ENCODE measurements at regions of chr5 and their contacts with region 1.

Region 1: DNA sequence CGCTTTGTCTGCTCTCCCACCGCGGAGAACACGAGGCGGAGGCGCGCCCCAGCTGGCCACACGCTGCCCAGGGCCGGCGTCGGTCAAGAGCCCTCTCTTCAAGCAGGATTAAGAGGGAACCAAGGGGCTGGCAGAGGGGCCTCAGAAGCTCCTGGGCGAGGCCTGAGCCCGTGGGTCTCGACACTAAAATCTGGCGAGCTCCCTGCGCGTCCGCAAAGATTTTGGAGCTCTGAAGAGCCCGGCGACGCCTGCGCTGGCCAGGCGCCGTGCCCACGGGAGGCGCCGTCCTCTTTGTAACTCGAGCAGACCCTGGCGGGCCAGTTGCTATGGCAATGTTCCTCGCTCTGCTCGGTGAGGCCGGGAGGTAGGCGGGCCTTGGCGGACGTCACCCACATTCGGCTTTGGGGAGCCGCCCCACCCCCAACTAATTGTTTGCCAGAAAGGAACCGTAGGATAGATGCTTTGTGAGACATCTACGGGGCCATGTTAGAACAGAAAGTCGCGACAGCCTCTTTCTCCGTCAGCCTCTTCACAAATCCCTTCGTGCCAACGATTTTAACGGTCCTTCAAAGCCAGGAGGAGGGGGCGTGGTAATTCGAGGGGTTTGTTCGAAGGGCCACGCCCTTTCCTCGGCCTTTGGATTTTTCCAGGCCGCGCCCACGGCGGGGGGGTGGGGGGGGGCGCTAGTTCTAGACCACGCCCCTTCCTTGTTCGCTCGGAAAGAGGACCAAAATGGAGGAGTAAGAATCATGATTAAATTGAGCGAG is 714 bp upstream of the CNOT8 start:
- DNase-seq: peak; percentile 84
- H3K4me3 Mint-ChIP-seq: peak overlapping the region; percentile 98
- H3K27ac Mint-ChIP-seq: peak overlapping the region; percentile 100
- H3K4me1 Mint-ChIP-seq: peaks cover 30% of the 10 kb centered on the region
- H3K27me3 Mint-ChIP-seq: no peaks in the 10 kb centered on the region

Region 2: DNA sequence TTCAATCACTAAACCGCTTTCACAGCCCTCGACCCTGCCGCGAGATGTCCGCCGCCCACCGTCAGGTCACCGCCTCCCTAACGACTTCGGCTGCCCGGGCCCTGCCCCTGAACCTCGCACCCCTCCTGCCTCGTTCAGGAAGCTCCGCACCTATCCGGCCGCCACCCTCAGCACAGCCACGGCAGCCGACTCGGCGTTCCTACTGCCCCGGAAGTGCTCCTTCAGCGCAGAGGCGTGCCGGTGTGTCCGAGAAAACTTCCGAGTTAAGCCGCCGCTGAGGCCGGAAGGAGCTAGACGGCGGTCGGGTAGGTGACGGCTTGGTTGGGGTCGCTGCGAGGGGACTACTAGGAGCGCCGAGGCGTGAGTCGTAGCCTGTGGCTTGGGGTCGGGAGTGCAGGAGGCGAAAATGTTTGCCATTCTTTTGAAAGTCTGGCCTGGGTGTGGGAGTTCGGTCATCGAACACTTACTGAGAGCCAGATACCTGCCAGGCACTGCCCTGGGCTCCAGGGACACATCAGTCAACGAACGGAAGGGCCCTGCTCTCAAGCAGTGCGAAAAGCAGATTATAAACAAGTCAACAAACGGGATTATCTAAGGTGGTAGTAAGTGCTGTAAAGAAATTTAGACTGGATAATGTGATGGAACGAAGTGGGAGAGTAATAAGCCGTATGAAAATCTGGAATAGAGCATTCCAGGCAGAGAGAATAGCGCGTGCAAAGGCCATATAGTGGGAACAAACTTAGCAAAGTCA is 818.8 kb before region 1 on chr5 and contains the starts of genes FAM114A2 and MFAP3:
- intact Hi-C with region 1: loop called (anchors 10 kb)
- DNase-seq: peak; percentile 87
- H3K4me3 Mint-ChIP-seq: peak within 1 kb of the TSS; percentile 98
- H3K27ac Mint-ChIP-seq: peak within 1 kb of the TSS; percentile 94
- H3K4me1 Mint-ChIP-seq: peaks cover 37% of the 10 kb centered on the region
- H3K27me3 Mint-ChIP-seq: no peaks in the 10 kb centered on the region
- total RNA-seq, gene FAM114A2: 23.6 and 31.2 TPM in 2 replicates
- total RNA-seq, gene MFAP3: 17.1 and 21.8 TPM in 2 replicates

Region 3: DNA sequence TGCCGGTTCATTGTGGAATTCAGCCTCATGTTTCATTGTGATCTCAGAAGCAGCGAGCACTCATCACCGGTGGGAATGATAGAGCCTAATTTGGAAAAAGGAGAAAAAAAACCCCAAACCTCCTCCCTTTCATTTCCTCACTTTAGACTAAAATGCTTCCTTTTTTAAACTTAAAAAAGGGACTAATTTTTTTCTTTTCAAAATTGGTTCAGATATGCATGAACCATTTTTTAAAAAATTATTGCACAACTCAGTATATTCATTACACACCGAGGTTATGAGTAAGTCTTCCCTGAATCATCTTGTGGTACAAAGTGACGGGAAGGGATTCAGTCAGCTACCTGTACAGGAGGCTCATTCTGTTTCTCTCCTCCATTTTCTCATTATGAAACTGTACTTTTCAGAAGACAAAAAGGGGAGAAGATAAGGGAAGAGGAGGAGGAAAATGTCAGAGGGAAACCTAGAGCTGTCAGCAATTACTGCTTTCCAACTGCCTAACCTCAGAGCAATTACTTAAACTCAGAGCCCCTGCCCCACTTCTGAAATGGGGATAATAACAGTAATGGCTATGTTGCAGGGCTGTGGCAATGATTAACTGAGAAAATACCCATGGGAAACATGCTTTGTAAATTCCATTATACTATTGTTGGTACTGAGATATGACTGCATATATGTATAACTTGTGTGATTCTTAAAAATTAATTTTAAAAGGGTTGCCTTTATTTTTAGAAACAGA is 643.2 kb before region 1 on chr5:
- intact Hi-C with region 1: loop called (anchors 10 kb)
- DNase-seq: no peak
- H3K4me3 Mint-ChIP-seq: peak overlapping the region; percentile 9
- H3K27ac Mint-ChIP-seq: peak overlapping the region; percentile 83
- H3K4me1 Mint-ChIP-seq: peaks cover 43% of the 10 kb centered on the region
- H3K27me3 Mint-ChIP-seq: no peaks in the 10 kb centered on the region

Region 4: GRCh38 chr5:154445422-154446182 is 412.1 kb before region 1 on chr5 and contains the start of gene SAP30L:
- intact Hi-C with region 1: loop called (anchors 1 kb)
- DNase-seq: peak; percentile 96
- H3K4me3 Mint-ChIP-seq: peak within 1 kb of the TSS; percentile 98
- H3K27ac Mint-ChIP-seq: peak within 1 kb of the TSS; percentile 94
- H3K4me1 Mint-ChIP-seq: peaks cover 31% of the 10 kb centered on the region
- H3K27me3 Mint-ChIP-seq: no peaks in the 10 kb centered on the region
- total RNA-seq, gene SAP30L: 35.9 and 36.0 TPM in 2 replicates

Region 5: GRCh38 chr5:154647114-154647760 is 210.5 kb before region 1 on chr5:
- intact Hi-C with region 1: loop called (anchors 1 kb)
- DNase-seq: no peak
- H3K4me3 Mint-ChIP-seq: peak overlapping the region; percentile 71
- H3K27ac Mint-ChIP-seq: no peak overlapping the region
- H3K4me1 Mint-ChIP-seq: peaks cover 15% of the 10 kb centered on the region
- H3K27me3 Mint-ChIP-seq: peaks cover 37% of the 10 kb centered on the region

Region 6: DNA sequence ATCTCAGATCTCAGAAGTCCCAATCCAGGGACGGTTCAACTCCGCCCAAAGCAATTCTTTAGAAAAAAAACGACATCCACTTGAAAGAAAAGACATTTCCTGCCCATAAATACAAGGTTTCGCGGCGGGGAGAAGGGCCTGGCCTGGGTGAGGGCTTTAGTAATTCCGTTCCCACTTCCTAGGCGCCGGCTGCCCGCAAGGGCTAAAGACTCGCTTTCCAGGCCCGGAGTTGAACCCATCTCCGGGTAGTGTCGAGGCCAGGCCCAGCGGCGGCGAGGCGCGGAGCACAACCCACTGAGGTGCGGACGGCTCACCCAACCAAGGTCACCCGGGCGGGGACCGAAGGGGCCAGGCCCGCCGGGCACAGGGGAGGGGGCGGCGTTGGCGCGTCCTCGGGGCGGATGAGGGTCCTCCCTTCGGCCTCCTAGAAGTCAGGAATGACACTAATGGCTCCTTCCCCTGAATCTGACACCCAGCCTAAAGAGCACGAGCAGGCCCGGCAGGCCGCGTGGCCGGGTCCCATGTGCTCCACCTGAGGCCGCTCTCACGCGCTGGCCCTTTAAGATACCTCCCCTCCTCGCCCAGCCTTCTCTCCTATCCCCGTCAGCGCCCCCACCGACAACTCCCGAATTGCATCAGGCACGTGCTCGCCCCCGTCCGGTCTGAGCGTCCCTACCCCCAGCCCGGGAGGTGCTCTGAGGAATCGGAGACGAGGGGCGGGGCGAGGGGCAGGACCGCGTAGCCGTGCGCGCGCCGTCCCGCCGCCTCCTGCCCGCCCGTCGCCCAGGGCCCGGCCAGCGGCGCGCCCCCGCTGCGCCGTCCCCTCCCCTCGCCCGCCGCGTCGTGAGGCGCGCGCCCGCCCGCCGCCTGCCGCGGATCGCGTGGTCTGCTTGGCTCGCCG is 103.0 kb before region 1 on chr5:
- intact Hi-C with region 1: loop called (anchors 1 kb)
- DNase-seq: peak; percentile 99
- H3K4me3 Mint-ChIP-seq: peak overlapping the region; percentile 84
- H3K27ac Mint-ChIP-seq: peak overlapping the region; percentile 97
- H3K4me1 Mint-ChIP-seq: peaks cover 34% of the 10 kb centered on the region
- H3K27me3 Mint-ChIP-seq: no peaks in the 10 kb centered on the region

Region 7: GRCh38 chr5:154899151-154899816 is 41.6 kb after region 1 on chr5:
- intact Hi-C with region 1: no loop called
- DNase-seq: no peak
- H3K4me3 Mint-ChIP-seq: no peak overlapping the region
- H3K27ac Mint-ChIP-seq: no peak overlapping the region
- H3K4me1 Mint-ChIP-seq: no peaks in the 10 kb centered on the region
- H3K27me3 Mint-ChIP-seq: no peaks in the 10 kb centered on the region

Region 8: GRCh38 chr5:154940772-154941620 is 83.3 kb after region 1 on chr5 and contains the start of gene MRPL22:
- intact Hi-C with region 1: loop called (anchors 1 kb)
- DNase-seq: peak; percentile 93
- H3K4me3 Mint-ChIP-seq: peak within 1 kb of the TSS; percentile 98
- H3K27ac Mint-ChIP-seq: peak within 1 kb of the TSS; percentile 95
- H3K4me1 Mint-ChIP-seq: peaks cover 32% of the 10 kb centered on the region
- H3K27me3 Mint-ChIP-seq: no peaks in the 10 kb centered on the region
- total RNA-seq, gene MRPL22: 79.2 and 81.9 TPM in 2 replicates

Measured in activated T-helper 2 cell treated with anti-CD3 and anti-CD28 coated beads, Interferon-gamma antibody, Interleukin-2, Interleukin-4, amounts not matched to agents 10 μg/mL and 5 μg/mL and 100 μg/mL, durations not matched to agents 14 hours and 24 hours and 36 hours (primary cell).